ENCODE measurements at regions of chr2 and their contacts with region 1.

Region 1: DNA sequence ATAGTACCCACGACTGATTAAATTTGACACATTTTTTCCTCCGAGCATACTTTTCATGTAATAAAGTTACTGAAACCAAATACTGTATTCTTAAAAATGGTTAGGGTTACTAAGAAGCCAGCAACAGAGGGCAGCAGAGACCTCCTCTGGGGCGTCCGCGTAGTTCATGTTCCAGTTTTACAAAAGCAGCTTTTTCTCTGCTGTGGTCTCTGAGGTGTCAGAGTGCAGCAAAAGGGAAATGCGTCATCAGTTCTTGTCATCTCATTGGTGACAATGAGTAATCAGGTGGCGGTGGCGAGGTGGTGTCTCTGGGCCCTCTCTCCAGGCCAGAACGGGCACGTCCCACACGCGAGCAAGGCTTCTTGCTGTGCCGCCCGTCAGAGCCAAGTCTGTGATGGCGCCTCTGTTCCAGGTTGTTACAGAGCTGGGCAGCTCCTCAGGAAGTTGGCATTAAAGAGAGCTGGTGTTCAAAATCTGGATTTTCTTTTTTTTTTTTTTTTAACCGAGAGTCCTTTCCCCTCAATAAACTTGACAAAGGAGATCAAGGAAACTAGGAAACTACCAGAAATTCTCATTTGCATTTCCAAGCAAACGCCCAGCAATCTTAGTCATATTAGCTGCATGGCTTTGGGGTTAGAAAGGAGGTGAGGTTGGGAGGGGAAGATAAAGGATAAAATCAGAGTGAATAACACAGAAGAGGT is 98.6 kb upstream of the BZW1 start:
- DNase-seq: peak; percentile 72 to 96 (median 94)
- ATAC-seq: peak; percentile 98
- H3K4me3 ChIP-seq: peak overlapping the region; percentile 24
- H3K4me3 Mint-ChIP-seq: peak overlapping the region; percentile 75 to 88 (median 81)
- H3K27ac ChIP-seq: peak overlapping the region; percentile 82
- H3K27ac Mint-ChIP-seq: peak overlapping the region; percentile 97 to 100 (median 99)
- H3K4me1 ChIP-seq: peaks cover 5 to 8% of the 10 kb centered on the region in 2 donors
- H3K4me1 Mint-ChIP-seq: peaks cover 0 to 25% (median 12%) of the 10 kb centered on the region in 7 donors
- H3K27me3 ChIP-seq: no peaks in the 10 kb centered on the region
- H3K27me3 Mint-ChIP-seq: peaks cover 0 to 4% (median 0%) of the 10 kb centered on the region in 5 donors

Region 2: GRCh38 chr2:200373973-200374416 is 339.2 kb before region 1 on chr2:
- CTCF ChIA-PET with region 1: no interaction called
- POLR2A ChIA-PET with region 1: no interaction called
- intact Hi-C with region 1: loop called in 1 of 2 experiments (anchors 10 kb)
- DNase-seq: peak in 7 of 9 donors; percentile 41 to 66 (median 56)
- ATAC-seq: peak; percentile 86
- H3K4me3 ChIP-seq: peak overlapping the region; percentile 74
- H3K4me3 Mint-ChIP-seq: peak overlapping the region; percentile 74 to 96 (median 89)
- H3K27ac ChIP-seq: peak overlapping the region; percentile 66
- H3K27ac Mint-ChIP-seq: peak overlapping the region; percentile 86 to 96 (median 93)
- H3K4me1 ChIP-seq: peaks cover 32 to 34% of the 10 kb centered on the region in 2 donors
- H3K4me1 Mint-ChIP-seq: peaks cover 24 to 59% (median 52%) of the 10 kb centered on the region in 7 donors
- H3K27me3 ChIP-seq: no peaks in the 10 kb centered on the region
- H3K27me3 Mint-ChIP-seq: no peaks in the 10 kb centered on the region

Region 3: GRCh38 chr2:200787348-200788120 is 74.4 kb after region 1 on chr2:
- CTCF ChIA-PET with region 1: no interaction called
- POLR2A ChIA-PET with region 1: no interaction called
- intact Hi-C with region 1: no loop called
- DNase-seq: no peak
- ATAC-seq: no peak
- H3K4me3 ChIP-seq: no peak overlapping the region
- H3K4me3 Mint-ChIP-seq: no peak overlapping the region
- H3K27ac ChIP-seq: no peak overlapping the region
- H3K27ac Mint-ChIP-seq: no peak overlapping the region
- H3K4me1 ChIP-seq: no peaks in the 10 kb centered on the region
- H3K4me1 Mint-ChIP-seq: peaks cover 0 to 10% (median 0%) of the 10 kb centered on the region in 7 donors
- H3K27me3 ChIP-seq: no peaks in the 10 kb centered on the region
- H3K27me3 Mint-ChIP-seq: peaks cover 0 to 9% (median 5%) of the 10 kb centered on the region in 5 donors

Region 4: DNA sequence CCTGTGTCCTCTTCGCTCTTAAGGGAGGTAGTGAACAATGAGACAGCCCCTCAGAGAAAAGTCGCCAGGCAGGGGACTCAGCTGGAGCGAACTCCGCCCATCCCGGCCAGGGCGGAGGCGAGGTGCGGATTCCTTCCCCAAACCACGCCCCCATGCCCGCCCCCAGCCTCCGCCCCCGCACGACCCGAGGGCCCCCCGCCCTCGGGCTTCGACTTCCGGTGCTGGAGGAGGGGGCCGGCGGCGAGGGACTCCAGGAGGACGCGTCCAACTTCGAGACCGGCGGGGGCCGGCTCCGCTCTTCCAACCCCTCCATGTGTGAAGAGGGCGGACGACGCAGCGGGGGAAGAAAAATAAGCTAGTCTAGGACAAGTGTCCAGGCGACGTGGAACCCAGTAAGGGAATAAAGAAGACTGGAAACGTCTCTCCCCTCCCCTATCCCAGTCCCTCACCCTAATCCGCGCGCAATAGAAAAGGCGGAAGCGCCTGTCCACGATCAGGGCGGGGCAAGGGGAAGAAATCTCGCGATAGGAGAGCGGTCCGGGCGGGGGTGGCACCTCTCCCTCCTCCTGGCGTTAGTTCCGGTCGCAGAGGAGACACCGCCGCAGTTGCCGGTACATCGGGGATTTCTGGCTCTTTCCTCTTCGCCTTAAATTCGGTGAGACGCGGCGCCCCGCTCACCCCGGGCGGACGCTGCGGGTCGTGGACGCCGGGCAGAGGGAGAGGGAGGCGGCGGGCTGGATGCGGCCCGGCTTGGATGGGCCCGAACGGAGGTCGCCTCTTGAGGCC is 98.4 kb after region 1 on chr2 and contains the start of gene BZW1:
- CTCF ChIA-PET with region 1: interaction called, 3 read pairs
- POLR2A ChIA-PET with region 1: interaction called, 17 read pairs
- intact Hi-C with region 1: loop called (anchors 1 kb)
- DNase-seq: peak; percentile 92 to 99 (median 98)
- ATAC-seq: peak; percentile 91
- H3K4me3 ChIP-seq: peak within 1 kb of the TSS; percentile 89
- H3K4me3 Mint-ChIP-seq: peak within 1 kb of the TSS; percentile 89 to 99 (median 98)
- H3K27ac ChIP-seq: peak within 1 kb of the TSS; percentile 99
- H3K27ac Mint-ChIP-seq: peak within 1 kb of the TSS; percentile 91 to 99 (median 98)
- H3K4me1 ChIP-seq: peaks cover 19 to 24% of the 10 kb centered on the region in 2 donors
- H3K4me1 Mint-ChIP-seq: peaks cover 30 to 56% (median 48%) of the 10 kb centered on the region in 7 donors
- H3K27me3 ChIP-seq: no peaks in the 10 kb centered on the region
- H3K27me3 Mint-ChIP-seq: peaks cover 0 to 2% (median 0%) of the 10 kb centered on the region in 5 donors
- total RNA-seq, gene BZW1: 127 to 246 (median 207) TPM

Region 5: GRCh38 chr2:201071479-201072200 is 358.5 kb after region 1 on chr2 and contains the starts of genes HYCC2 and NDUFB3:
- CTCF ChIA-PET with region 1: interaction called, 7 read pairs
- POLR2A ChIA-PET with region 1: interaction called, 39 read pairs
- intact Hi-C with region 1: loop called (anchors 1 kb)
- DNase-seq: peak; percentile 79 to 96 (median 95)
- ATAC-seq: peak; percentile 98
- H3K4me3 ChIP-seq: peak within 1 kb of the TSS; percentile 92
- H3K4me3 Mint-ChIP-seq: peak within 1 kb of the TSS; percentile 91 to 99 (median 94)
- H3K27ac ChIP-seq: peak within 1 kb of the TSS; percentile 83
- H3K27ac Mint-ChIP-seq: peak within 1 kb of the TSS; percentile 86 to 99 (median 95)
- H3K4me1 ChIP-seq: peaks cover 32 to 36% of the 10 kb centered on the region in 2 donors
- H3K4me1 Mint-ChIP-seq: peaks cover 31 to 74% (median 55%) of the 10 kb centered on the region in 7 donors
- H3K27me3 ChIP-seq: no peaks in the 10 kb centered on the region
- H3K27me3 Mint-ChIP-seq: no peaks in the 10 kb centered on the region
- total RNA-seq, gene HYCC2: 34.8 to 38.3 (median 36.1) TPM
- total RNA-seq, gene NDUFB3: 18.3 to 109 (median 38.3) TPM

Region 6: GRCh38 chr2:201642579-201643215 is 929.5 kb after region 1 on chr2:
- CTCF ChIA-PET with region 1: no interaction called
- POLR2A ChIA-PET with region 1: no interaction called
- intact Hi-C with region 1: loop called in 1 of 2 experiments (anchors 5 kb)
- DNase-seq: peak; percentile 81 to 94 (median 92)
- ATAC-seq: peak; percentile 94
- H3K4me3 ChIP-seq: peak overlapping the region; percentile 95
- H3K4me3 Mint-ChIP-seq: peak overlapping the region; percentile 86 to 99 (median 96)
- H3K27ac ChIP-seq: peak overlapping the region; percentile 87
- H3K27ac Mint-ChIP-seq: peak overlapping the region; percentile 76 to 100 (median 97)
- H3K4me1 ChIP-seq: peaks cover 3 to 5% of the 10 kb centered on the region in 2 donors
- H3K4me1 Mint-ChIP-seq: peaks cover 5 to 21% (median 12%) of the 10 kb centered on the region in 7 donors
- H3K27me3 ChIP-seq: no peaks in the 10 kb centered on the region
- H3K27me3 Mint-ChIP-seq: peaks cover 0 to 4% (median 0%) of the 10 kb centered on the region in 5 donors

Measured in naive thymus-derived CD4-positive, alpha-beta T cell (primary cell).